ENCODE measurements at regions of chr18 and their contacts with region 1.

Region 1: DNA sequence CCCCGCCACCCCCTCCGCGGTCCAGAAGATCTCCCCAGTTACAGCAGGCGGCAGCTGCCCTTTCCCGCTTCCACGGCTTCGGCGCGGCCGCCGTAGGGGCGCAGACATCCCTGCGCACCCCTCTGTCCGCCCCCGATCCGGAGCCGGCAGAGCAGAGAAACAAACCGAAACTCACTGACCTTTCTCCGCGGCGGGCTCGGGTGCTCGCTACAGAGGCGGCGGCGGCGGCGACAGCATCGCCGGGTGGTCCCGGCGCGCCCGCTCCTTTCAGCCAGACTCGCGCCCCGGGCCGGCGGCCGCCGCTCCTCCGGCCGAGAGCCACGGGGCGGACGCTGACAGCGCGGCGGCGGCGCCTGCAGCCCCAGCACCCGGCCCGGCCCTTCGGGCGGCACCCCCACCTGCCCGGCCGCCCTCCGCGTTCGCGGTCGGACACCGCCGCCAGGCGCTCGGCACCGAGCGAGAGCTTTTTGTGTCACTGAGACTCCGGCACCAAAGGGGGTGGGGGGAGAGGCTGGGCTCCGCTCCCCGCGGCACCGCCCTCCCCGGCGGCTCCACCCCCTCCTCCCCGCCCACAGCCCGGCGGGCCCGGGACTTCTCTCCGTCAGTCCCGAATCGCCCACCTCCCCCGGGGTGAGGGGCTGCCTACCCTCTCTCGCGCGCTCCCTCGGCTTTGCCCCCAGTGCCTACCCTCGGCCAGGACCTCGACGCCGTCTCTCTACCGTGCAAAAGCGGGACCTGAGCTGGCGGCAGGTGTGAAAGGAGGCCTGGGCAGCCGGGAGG is 1.4 kb upstream of the RNF152 start:
- DNase-seq: peak; percentile 87
- ATAC-seq: peak; percentile 95
- H3K4me3 ChIP-seq: peak overlapping the region; percentile 73
- H3K27ac ChIP-seq: peak overlapping the region; percentile 82
- H3K4me1 ChIP-seq: peaks cover 8% of the 10 kb centered on the region
- H3K27me3 ChIP-seq: peaks cover 6% of the 10 kb centered on the region
- CTCF ChIP-seq: peak; percentile 27

Region 2: DNA sequence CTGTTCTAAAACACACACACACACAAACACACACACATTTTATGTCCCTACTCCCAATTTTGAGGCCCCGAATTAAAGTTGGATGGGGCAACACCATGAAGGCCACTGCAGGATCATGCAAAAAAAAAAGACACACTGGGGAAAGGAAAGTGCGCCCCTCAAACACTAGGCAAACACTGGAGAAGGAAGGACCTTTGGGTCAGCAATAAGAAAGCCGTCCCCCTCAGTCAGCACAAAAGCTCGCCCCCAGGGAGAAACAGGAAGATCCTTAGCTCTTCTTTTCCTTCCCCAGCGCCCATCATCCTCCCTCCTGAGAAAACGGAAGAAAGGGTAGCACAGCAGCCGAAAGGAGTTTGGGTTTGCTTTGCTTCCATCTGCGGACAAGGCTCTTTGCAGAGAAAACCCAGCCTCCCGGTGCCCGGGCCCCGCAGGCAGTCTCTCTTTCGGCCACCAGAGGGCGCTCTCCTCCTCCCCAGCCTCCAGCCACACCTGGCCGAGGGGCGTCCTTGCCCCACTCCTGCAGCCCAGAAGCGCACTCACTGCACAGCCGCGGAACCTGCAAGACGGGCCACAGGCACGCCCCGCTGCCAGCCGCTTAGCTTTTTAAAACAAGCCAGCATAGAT is 312.5 kb before region 1 on chr18:
- intact Hi-C with region 1: loop called (anchors 5 kb)
- DNase-seq: peak; percentile 85
- ATAC-seq: peak; percentile 97
- H3K4me3 ChIP-seq: peak overlapping the region; percentile 43
- H3K27ac ChIP-seq: peak overlapping the region; percentile 9
- H3K4me1 ChIP-seq: peaks cover 10% of the 10 kb centered on the region
- H3K27me3 ChIP-seq: no peaks in the 10 kb centered on the region
- CTCF ChIP-seq: peak; percentile 99

Region 3: GRCh38 chr18:61635901-61636528 is 258.1 kb before region 1 on chr18:
- intact Hi-C with region 1: loop called (anchors 10 kb)
- DNase-seq: peak; percentile 59
- ATAC-seq: peak; percentile 75
- H3K4me3 ChIP-seq: no peak overlapping the region
- H3K27ac ChIP-seq: no peak overlapping the region
- H3K4me1 ChIP-seq: peaks cover 9% of the 10 kb centered on the region
- H3K27me3 ChIP-seq: no peaks in the 10 kb centered on the region
- CTCF ChIP-seq: peak; percentile 82

Region 4: DNA sequence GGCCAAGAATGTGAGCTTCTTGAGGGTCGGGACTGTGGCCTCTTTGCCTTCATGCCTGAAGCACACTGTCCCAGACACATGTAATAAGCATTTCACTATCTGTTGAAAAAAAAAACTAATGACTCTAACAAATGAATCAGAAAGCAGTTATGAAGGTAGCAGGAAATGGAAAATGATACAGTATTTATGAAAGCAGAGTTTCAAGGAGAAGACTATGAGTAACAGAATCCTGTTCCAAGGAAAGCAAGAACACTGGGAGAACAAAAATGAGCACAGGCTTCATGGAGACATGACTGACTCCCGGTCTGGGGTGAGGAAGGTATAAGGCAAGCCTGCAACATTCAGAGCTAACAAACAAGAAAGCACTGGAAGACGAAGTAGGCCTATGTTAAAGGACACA is 192.2 kb before region 1 on chr18:
- intact Hi-C with region 1: no loop called
- DNase-seq: no peak
- ATAC-seq: no peak
- H3K4me3 ChIP-seq: no peak overlapping the region
- H3K27ac ChIP-seq: no peak overlapping the region
- H3K4me1 ChIP-seq: no peaks in the 10 kb centered on the region
- H3K27me3 ChIP-seq: no peaks in the 10 kb centered on the region
- CTCF ChIP-seq: no peak